Activated CD8-positive, alpha-beta T cell treated with anti-CD3 and anti-CD28 coated beads for 36 hours (primary cell): ENCODE measurements at regions of chr2 and their contacts with region 1.

Region 1: DNA sequence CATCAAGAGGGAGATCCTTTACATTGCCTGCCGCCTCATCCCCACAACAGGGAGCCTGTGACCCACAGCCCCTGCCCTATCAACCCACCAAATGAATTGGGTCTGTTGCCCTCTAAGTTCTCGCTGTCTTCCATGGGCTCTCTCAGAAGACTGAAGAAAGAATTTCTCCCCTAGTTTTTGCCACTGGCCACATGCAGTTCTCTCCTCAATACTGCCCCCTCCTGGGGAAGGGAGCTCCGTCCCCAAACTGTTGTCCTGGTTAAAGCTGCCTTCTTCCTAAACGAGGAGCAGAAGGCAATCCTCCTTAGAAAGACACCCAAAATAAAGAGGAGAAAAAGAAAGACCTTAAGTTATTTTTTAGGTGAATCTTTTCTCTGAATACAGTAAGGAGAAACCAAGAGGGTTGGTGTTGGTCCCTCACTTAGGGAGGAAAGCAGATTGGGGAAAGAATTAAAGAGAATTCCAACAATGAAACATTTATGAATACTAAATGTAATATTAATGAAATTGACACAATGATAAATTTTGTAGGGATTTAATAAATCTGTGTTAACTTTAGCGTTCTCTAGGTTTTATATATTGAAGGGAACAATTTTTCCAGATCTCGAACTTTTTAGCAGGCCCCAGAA is 31.1 kb upstream of the SATB2 start:
- DNase-seq: peak; percentile 62
- ATAC-seq: no peak
- H3K4me3 Mint-ChIP-seq: no peak overlapping the region
- H3K27ac Mint-ChIP-seq: no peak overlapping the region
- H3K4me1 Mint-ChIP-seq: no peaks in the 10 kb centered on the region
- H3K27me3 Mint-ChIP-seq: peaks cover 24% of the 10 kb centered on the region
- CTCF ChIP-seq: peak; percentile 71

Region 2: DNA sequence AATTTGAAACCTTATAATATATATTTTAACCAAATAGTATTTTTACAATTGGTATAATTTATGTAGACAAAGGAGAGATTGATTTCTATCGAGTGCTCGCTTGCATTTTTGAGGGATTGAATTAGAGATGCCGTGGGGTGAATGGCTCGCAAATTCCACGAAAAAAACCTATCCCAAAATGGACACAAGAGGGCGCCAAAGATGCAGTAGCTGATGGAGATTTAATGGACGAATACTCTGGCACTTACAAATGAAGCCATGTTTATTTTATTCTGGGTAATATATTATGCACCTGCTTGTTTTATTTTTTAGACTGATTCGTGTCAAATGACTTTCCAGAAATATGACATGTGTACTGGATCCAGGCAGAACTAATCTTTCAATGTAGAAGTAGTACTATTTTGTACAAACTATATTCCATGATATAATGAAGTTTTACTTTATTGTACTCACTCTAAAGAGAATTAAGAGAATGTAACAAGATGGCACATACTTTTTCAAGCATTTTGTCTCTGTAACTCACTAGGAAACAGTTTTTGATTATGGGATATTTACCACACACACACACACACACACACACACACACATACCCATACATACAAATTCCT is 1179.1 kb before region 1 on chr2:
- CTCF ChIA-PET with region 1: interaction called, 39 read pairs
- POLR2A ChIA-PET with region 1: no interaction called
- intact Hi-C with region 1: loop called (anchors 2 kb)
- DNase-seq: peak; percentile 71
- ATAC-seq: no peak
- H3K4me3 Mint-ChIP-seq: no peak overlapping the region
- H3K27ac Mint-ChIP-seq: no peak overlapping the region
- H3K4me1 Mint-ChIP-seq: no peaks in the 10 kb centered on the region
- H3K27me3 Mint-ChIP-seq: peaks cover 22% of the 10 kb centered on the region
- CTCF ChIP-seq: peak; percentile 71

Region 3: DNA sequence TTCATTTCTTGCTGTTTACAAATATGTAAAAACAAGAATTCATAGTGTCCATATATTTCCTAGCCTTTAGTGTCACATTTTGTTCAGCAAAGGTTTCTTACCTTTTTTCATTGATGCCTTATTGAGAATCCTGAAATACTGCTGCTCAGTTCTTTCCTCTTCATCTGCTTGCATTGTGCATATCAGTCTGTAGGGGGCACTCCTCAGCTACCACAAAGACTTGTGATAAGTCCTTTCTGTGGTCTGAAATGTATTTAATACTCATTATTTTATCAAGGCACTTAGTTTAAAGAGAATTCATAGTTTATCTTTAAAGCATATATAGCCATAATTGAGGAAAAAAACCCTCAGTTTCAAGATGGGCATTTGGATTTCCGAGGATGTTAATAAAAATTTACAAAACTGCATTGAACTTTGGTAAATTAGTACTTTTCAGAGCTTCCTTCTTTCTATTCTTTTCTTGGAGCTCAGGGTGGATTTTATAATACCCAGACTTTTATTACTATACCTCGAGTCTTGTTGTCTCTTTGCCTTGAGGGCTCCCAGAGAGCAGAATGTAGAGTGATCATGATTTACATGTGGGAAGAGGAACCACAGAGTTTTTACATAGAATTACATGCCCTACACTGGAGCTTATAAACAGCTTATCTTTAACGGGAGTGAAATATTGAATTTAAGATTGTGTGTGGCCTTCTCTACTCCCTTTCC is 1114.4 kb before region 1 on chr2:
- CTCF ChIA-PET with region 1: interaction called, 6 read pairs
- POLR2A ChIA-PET with region 1: no interaction called
- intact Hi-C with region 1: loop called (anchors 5 kb)
- DNase-seq: peak; percentile 66
- ATAC-seq: no peak
- H3K4me3 Mint-ChIP-seq: no peak overlapping the region
- H3K27ac Mint-ChIP-seq: no peak overlapping the region
- H3K4me1 Mint-ChIP-seq: peaks cover 7% of the 10 kb centered on the region
- H3K27me3 Mint-ChIP-seq: peaks cover 31% of the 10 kb centered on the region
- CTCF ChIP-seq: peak; percentile 86

Region 4: GRCh38 chr2:199596549-199596948 is 107.7 kb after region 1 on chr2:
- CTCF ChIA-PET with region 1: no interaction called
- POLR2A ChIA-PET with region 1: no interaction called
- intact Hi-C with region 1: no loop called
- DNase-seq: no peak
- ATAC-seq: no peak
- H3K4me3 Mint-ChIP-seq: no peak overlapping the region
- H3K27ac Mint-ChIP-seq: no peak overlapping the region
- H3K4me1 Mint-ChIP-seq: no peaks in the 10 kb centered on the region
- H3K27me3 Mint-ChIP-seq: peaks cover 2% of the 10 kb centered on the region
- CTCF ChIP-seq: peak; percentile 21